GM12878 (cell line): ENCODE measurements at regions of chr10 and their contacts with region 1.

Region 1: DNA sequence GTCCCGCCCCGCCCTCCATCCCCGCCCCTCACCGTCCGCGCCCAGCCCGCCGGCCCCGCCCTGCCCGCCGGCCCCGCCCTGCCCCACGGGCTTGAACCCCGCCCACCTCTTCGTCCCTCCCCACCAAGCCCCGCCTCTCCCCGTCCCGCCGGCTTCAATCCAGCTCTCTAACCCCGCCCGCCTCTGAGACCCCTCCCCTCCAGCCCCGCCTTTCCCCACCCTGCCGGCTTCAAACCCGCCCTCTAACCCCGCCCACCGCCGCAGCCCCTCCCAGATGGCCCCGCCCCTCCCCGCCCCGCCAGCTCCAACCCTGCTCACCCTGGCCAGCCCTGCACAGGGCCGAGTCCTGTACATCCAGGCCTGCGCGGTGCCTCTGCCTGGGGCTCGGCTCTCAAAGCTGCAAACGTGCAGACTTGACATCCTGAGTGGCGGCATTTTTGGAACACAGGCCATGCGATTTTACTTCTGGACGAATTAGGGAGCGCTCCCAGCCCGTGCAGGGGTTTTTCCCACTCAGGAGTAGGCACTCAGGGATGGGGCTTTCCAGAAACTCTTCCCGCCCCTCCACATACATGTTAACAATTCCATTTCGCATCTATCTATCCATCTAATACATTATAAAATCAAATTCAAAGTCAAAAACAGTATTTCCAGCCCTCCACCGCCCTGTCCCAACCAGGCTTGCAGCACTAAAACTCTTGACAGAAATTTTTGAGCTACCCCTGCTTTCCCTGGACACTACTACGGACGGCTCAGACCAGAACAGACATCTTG is 475 bp upstream of the NMT2 start:
- DNase-seq: peak; percentile 48
- ATAC-seq: peak; percentile 66
- H3K4me3 ChIP-seq: no peak overlapping the region
- H3K27ac ChIP-seq: no peak overlapping the region
- H3K4me1 ChIP-seq: peaks cover 8% of the 10 kb centered on the region; the same call in 1 of the 2 replicates
- H3K27me3 ChIP-seq: no peaks in the 10 kb centered on the region; a peak in 1 of 4 replicates
- CTCF ChIP-seq: no peak
- EP300 ChIP-seq: no peak
- POLR2A ChIP-seq: no peak
- RAD21 ChIP-seq: no peak

Region 2: GRCh38 chr10:15106352-15107013 is 62.5 kb before region 1 on chr10:
- CTCF ChIA-PET with region 1: interaction called, 38 read pairs
- POLR2A ChIA-PET with region 1: interaction called, 3 read pairs
- RAD21 ChIA-PET with region 1: interaction called, 4 read pairs
- SMC1A ChIA-PET with region 1: interaction called, 19 read pairs
- in situ Hi-C with region 1: no loop called
- intact Hi-C with region 1: no loop called
- DNase-seq: peak; percentile 26
- ATAC-seq: peak; percentile 99
- H3K4me3 ChIP-seq: no peak overlapping the region
- H3K27ac ChIP-seq: no peak overlapping the region
- H3K4me1 ChIP-seq: no peaks in the 10 kb centered on the region
- H3K27me3 ChIP-seq: no peaks in the 10 kb centered on the region
- CTCF ChIP-seq: peak; percentile 90 to 95 (median 93)
- EP300 ChIP-seq: no peak
- POLR2A ChIP-seq: no peak
- RAD21 ChIP-seq: peak; percentile 91

Region 3: DNA sequence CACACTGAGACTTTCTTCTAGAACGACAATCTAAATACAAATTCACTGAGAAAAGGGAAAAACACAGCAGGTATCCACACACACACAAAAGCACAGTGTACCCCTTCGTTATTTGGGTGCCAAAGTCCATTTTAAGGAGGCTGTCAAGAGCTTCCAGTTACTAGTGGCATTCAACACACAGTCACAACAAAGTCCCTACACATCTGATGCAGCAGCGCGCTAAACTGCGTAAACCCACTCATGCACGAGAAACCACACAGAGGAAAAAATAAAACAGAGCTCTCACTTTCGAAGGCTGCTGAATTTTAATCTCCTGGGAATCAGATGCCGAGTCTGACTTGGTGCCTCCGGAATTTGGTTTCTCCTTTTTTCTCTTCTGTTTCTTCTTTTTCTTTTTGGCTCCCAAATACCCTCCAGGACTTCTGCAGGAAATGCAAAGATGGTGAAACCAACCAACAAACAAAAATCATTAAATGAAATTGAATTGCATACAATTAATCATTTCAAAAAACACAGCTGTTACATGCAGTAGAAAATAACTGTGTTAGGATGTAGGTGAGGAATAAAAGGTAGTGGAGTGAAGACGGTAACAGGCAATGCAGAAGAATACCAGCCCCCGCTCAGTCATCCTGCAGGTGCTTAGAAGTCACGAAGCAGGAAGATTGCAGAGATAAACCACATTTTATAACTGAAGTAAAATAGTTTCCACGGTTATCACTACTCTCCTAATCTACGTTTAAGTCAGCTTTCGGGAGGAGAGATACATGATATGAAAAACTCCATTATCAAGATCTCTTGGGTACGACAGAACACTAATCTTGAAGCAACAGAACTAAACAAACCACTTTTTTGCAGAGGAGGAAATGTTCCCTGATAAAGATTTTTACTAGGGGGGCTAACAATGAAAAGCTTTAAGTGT is 27.6 kb before region 1 on chr10:
- CTCF ChIA-PET with region 1: interaction called, 17 read pairs
- POLR2A ChIA-PET with region 1: interaction called, 4 read pairs
- RAD21 ChIA-PET with region 1: interaction called, 30 read pairs
- SMC1A ChIA-PET with region 1: interaction called, 86 read pairs
- in situ Hi-C with region 1: no loop called
- intact Hi-C with region 1: no loop called
- DNase-seq: peak; percentile 85
- ATAC-seq: peak; percentile 96
- H3K4me3 ChIP-seq: peak overlapping the region; percentile 19; the same call in 1 of the 2 replicates
- H3K27ac ChIP-seq: peak overlapping the region; percentile 7; the same call in 1 of the 2 replicates
- H3K4me1 ChIP-seq: peaks cover 16% of the 10 kb centered on the region
- H3K27me3 ChIP-seq: no peaks in the 10 kb centered on the region
- CTCF ChIP-seq: no peak
- EP300 ChIP-seq: peak; percentile 98 to 99
- POLR2A ChIP-seq: no peak
- RAD21 ChIP-seq: no peak

Region 4: DNA sequence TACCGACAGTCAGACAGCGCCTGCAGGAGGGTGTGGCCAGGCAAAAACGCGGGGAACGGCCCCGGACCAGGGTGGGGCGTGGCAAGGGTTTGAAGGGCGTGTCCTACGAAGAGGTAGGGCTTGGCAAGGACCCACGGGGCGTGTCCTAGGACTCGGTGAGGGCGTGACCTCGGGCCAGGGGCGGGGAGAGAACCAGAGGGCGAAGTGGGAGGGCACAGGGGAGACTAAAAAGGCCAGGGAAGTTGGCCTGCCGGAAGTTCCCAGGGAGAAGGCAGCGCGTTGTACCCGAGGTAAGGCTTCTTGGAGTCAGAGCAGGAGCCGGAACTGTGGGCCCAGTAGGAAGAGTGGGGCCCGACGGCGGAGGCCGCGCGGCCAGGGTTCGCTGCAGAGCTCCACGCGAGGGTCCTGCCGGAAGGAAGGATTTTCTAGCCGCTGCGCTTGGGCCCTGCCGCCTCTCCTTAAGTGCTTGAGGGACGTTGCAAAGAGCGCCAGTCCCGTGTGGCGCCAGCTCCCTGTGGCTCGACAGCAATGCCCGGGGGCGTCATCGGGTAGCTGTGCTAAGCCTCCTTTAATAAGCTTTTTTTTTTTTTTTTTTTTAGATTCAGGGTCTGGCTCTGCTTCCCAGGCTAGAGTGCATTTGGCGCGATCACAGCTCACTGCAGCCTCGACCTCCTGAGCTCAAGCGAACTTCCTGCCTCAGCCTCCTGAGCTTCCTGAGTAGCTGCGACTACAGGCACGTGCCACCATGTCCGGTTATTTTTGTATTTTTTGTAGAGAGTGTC is 1268.0 kb after region 1 on chr10 and contains the start of gene PTER:
- CTCF ChIA-PET with region 1: no interaction called
- POLR2A ChIA-PET with region 1: no interaction called
- RAD21 ChIA-PET with region 1: no interaction called
- SMC1A ChIA-PET with region 1: no interaction called
- in situ Hi-C with region 1: loop called (anchors 25 kb)
- intact Hi-C with region 1: no loop called
- DNase-seq: peak; percentile 89
- ATAC-seq: peak; percentile 97
- H3K4me3 ChIP-seq: peak within 1 kb of the TSS; percentile 80
- H3K27ac ChIP-seq: peak within 1 kb of the TSS; percentile 87
- H3K4me1 ChIP-seq: peaks cover 20% of the 10 kb centered on the region
- H3K27me3 ChIP-seq: no peaks in the 10 kb centered on the region
- CTCF ChIP-seq: no peak
- EP300 ChIP-seq: no peak
- POLR2A ChIP-seq: peak; percentile 86
- RAD21 ChIP-seq: no peak
- polyA plus RNA-seq, gene PTER: 18.4 to 29.4 TPM